Naive thymus-derived CD4-positive, alpha-beta T cell (primary cell): ENCODE measurements at regions of chr6 and their contacts with region 1.

Region 1: GRCh38 chr6:25992413-25993037 is 29.9 kb downstream of the TRIM38 start:
- DNase-seq: peak; percentile 83 to 98 (median 91)
- ATAC-seq: peak; percentile 99
- H3K4me3 ChIP-seq: peak overlapping the region; percentile 79
- H3K4me3 Mint-ChIP-seq: peak overlapping the region; percentile 91 to 98 (median 94)
- H3K27ac ChIP-seq: peak overlapping the region; percentile 73
- H3K27ac Mint-ChIP-seq: peak overlapping the region; percentile 86 to 98 (median 95)
- H3K4me1 ChIP-seq: no peaks in the 10 kb centered on the region
- H3K4me1 Mint-ChIP-seq: peaks cover 0 to 40% (median 24%) of the 10 kb centered on the region in 7 donors
- H3K27me3 ChIP-seq: no peaks in the 10 kb centered on the region
- H3K27me3 Mint-ChIP-seq: no peaks in the 10 kb centered on the region

Region 2: GRCh38 chr6:25223490-25223991 is 769.0 kb before region 1 on chr6:
- CTCF ChIA-PET with region 1: no interaction called
- POLR2A ChIA-PET with region 1: no interaction called
- intact Hi-C with region 1: no loop called
- DNase-seq: peak; percentile 32 to 63 (median 58)
- ATAC-seq: peak; percentile 78
- H3K4me3 ChIP-seq: peak overlapping the region; percentile 16
- H3K4me3 Mint-ChIP-seq: peak overlapping the region; percentile 31 to 85 (median 67)
- H3K27ac ChIP-seq: no peak overlapping the region
- H3K27ac Mint-ChIP-seq: no peak overlapping the region
- H3K4me1 ChIP-seq: peaks cover 0 to 6% of the 10 kb centered on the region in 2 donors
- H3K4me1 Mint-ChIP-seq: peaks cover 9 to 14% (median 11%) of the 10 kb centered on the region in 7 donors
- H3K27me3 ChIP-seq: no peaks in the 10 kb centered on the region
- H3K27me3 Mint-ChIP-seq: peaks cover 0 to 22% (median 8%) of the 10 kb centered on the region in 5 donors

Region 3: DNA sequence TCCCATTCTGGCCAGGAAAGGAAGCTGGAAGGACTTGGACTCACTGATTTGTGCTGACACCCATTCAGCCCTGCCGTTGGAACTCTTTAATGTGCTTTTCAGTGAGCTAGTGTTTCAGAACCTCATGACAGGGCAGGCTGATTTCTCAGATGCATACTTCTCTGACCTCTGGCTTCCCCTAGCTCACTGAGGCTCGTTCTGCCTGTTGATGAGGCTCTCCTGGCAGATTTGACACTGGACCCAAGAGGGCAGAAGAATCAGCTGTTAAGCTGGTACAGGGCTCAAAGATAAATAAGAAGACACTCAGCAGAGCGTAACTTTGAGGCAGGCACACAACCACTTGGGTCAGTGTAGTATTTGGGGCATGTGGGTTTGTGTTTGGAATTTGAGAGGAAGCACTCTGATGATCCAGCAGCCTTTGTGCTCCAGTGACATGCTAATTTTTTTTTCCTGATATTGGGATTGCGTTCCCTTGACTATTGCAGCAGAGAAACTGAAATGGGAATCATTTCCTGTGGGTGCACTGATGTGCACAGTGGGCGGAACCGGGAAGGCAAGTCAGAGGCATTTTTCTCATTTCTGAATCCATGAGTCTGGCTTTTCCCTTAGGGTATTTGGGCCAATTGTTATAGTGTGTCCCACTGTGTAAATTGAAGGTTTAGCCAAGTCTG is 633.2 kb before region 1 on chr6:
- CTCF ChIA-PET with region 1: no interaction called
- POLR2A ChIA-PET with region 1: no interaction called
- intact Hi-C with region 1: no loop called
- DNase-seq: no peak
- ATAC-seq: no peak
- H3K4me3 ChIP-seq: no peak overlapping the region
- H3K4me3 Mint-ChIP-seq: no peak overlapping the region
- H3K27ac ChIP-seq: no peak overlapping the region
- H3K27ac Mint-ChIP-seq: peak overlapping the region in 4 of 9 donors; percentile 18 to 55 (median 38)
- H3K4me1 ChIP-seq: no peaks in the 10 kb centered on the region
- H3K4me1 Mint-ChIP-seq: peaks cover 0 to 69% (median 34%) of the 10 kb centered on the region in 7 donors
- H3K27me3 ChIP-seq: no peaks in the 10 kb centered on the region
- H3K27me3 Mint-ChIP-seq: no peaks in the 10 kb centered on the region

Region 4: GRCh38 chr6:25717866-25718740 is 274.4 kb before region 1 on chr6:
- CTCF ChIA-PET with region 1: interaction called, 12 read pairs
- POLR2A ChIA-PET with region 1: interaction called, 4 read pairs
- intact Hi-C with region 1: loop called (anchors 1 to 2 kb)
- DNase-seq: peak in 4 of 9 donors; percentile 4 to 14 (median 10)
- ATAC-seq: no peak
- H3K4me3 ChIP-seq: no peak overlapping the region
- H3K4me3 Mint-ChIP-seq: no peak overlapping the region
- H3K27ac ChIP-seq: no peak overlapping the region
- H3K27ac Mint-ChIP-seq: no peak overlapping the region
- H3K4me1 ChIP-seq: no peaks in the 10 kb centered on the region
- H3K4me1 Mint-ChIP-seq: no peaks in the 10 kb centered on the region
- H3K27me3 ChIP-seq: no peaks in the 10 kb centered on the region
- H3K27me3 Mint-ChIP-seq: peaks cover 0 to 32% (median 12%) of the 10 kb centered on the region in 5 donors

Region 5: DNA sequence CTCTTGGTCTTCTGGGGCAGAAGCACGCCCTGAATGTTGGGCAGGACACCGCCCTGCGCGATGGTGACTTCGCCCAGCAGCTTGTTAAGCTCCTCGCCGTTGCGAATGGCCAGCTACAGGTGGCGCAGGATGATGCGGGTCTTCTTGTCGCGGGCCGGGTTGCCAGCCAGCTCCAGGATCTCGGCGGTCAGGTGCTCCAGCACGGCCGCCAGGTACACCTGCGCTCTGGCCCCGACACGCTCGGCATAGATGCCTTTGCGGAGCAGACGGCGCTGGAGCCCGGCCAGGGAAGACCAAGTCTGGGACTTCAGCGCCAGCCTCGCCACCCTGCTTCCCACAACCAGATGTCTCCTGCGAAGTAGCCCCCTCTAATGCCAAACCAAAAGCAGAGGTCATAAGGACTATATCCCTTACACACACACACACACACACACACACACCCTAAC is 110.5 kb before region 1 on chr6:
- CTCF ChIA-PET with region 1: no interaction called
- POLR2A ChIA-PET with region 1: no interaction called
- intact Hi-C with region 1: loop called in 1 of 2 experiments (anchors 5 kb)
- DNase-seq: peak in 7 of 9 donors; percentile 10 to 61 (median 35)
- ATAC-seq: peak; percentile 81
- H3K4me3 ChIP-seq: peak overlapping the region; percentile 53
- H3K4me3 Mint-ChIP-seq: peak overlapping the region in 8 of 10 donors; percentile 71 to 88 (median 84)
- H3K27ac ChIP-seq: no peak overlapping the region
- H3K27ac Mint-ChIP-seq: peak overlapping the region in 4 of 9 donors; percentile 16 to 60 (median 33)
- H3K4me1 ChIP-seq: no peaks in the 10 kb centered on the region
- H3K4me1 Mint-ChIP-seq: peaks cover 0 to 14% (median 0%) of the 10 kb centered on the region in 7 donors
- H3K27me3 ChIP-seq: no peaks in the 10 kb centered on the region
- H3K27me3 Mint-ChIP-seq: peaks cover 0 to 7% (median 0%) of the 10 kb centered on the region in 5 donors

Region 6: GRCh38 chr6:26003102-26003694 is 10.7 kb after region 1 on chr6:
- CTCF ChIA-PET with region 1: interaction called, 48 read pairs
- POLR2A ChIA-PET with region 1: interaction called, 22 read pairs
- intact Hi-C with region 1: no loop called
- DNase-seq: peak in 6 of 9 donors; percentile 34 to 44 (median 38)
- ATAC-seq: peak; percentile 63
- H3K4me3 ChIP-seq: no peak overlapping the region
- H3K4me3 Mint-ChIP-seq: no peak overlapping the region
- H3K27ac ChIP-seq: no peak overlapping the region
- H3K27ac Mint-ChIP-seq: no peak overlapping the region
- H3K4me1 ChIP-seq: no peaks in the 10 kb centered on the region
- H3K4me1 Mint-ChIP-seq: peaks cover 4 to 15% (median 10%) of the 10 kb centered on the region in 7 donors
- H3K27me3 ChIP-seq: no peaks in the 10 kb centered on the region
- H3K27me3 Mint-ChIP-seq: no peaks in the 10 kb centered on the region

Region 7: GRCh38 chr6:26020329-26021000 is 27.9 kb after region 1 on chr6:
- CTCF ChIA-PET with region 1: interaction called, 20 read pairs
- POLR2A ChIA-PET with region 1: interaction called, 65 read pairs
- intact Hi-C with region 1: loop called (anchors 1 kb)
- DNase-seq: peak; percentile 68 to 94 (median 91)
- ATAC-seq: peak; percentile 66
- H3K4me3 ChIP-seq: peak overlapping the region; percentile 96
- H3K4me3 Mint-ChIP-seq: peak overlapping the region; percentile 82 to 100 (median 94)
- H3K27ac ChIP-seq: peak overlapping the region; percentile 97
- H3K27ac Mint-ChIP-seq: peak overlapping the region; percentile 95 to 100 (median 100)
- H3K4me1 ChIP-seq: peaks cover 0 to 10% of the 10 kb centered on the region in 2 donors
- H3K4me1 Mint-ChIP-seq: peaks cover 10 to 62% (median 45%) of the 10 kb centered on the region in 7 donors
- H3K27me3 ChIP-seq: no peaks in the 10 kb centered on the region
- H3K27me3 Mint-ChIP-seq: peaks cover 0 to 6% (median 0%) of the 10 kb centered on the region in 5 donors

Region 8: DNA sequence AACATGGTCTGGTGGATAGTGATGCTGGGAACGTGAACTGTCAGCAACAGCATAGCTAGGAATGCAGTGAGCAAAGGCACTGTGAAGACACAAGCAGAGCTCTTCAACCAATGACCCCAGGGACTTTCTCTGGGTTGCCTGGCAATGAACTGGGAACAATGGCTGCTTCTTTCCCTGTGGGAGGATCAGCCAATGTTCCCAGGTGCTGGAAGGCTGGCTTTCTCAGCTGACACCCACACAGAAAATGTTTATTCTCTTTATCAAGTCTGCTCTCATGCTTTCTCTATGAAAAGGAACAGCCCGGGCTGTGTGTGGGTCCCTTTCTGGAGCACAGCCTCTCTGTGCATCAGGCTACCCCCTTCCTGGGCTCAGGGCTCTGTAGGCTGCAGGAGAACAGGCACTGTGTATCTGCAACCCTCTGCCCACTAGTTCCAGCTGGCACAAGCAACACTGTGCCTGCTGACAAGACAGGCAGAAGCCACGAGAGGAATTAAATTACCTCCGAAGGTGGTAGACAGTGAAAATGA is 148.9 kb after region 1 on chr6:
- CTCF ChIA-PET with region 1: no interaction called
- POLR2A ChIA-PET with region 1: no interaction called
- intact Hi-C with region 1: no loop called
- DNase-seq: no peak
- ATAC-seq: no peak
- H3K4me3 ChIP-seq: no peak overlapping the region
- H3K4me3 Mint-ChIP-seq: no peak overlapping the region
- H3K27ac ChIP-seq: no peak overlapping the region
- H3K27ac Mint-ChIP-seq: peak overlapping the region in 3 of 9 donors; percentile 13 to 59 (median 38)
- H3K4me1 ChIP-seq: no peaks in the 10 kb centered on the region
- H3K4me1 Mint-ChIP-seq: peaks cover 2 to 17% (median 9%) of the 10 kb centered on the region in 7 donors
- H3K27me3 ChIP-seq: no peaks in the 10 kb centered on the region
- H3K27me3 Mint-ChIP-seq: peaks cover 0 to 2% (median 0%) of the 10 kb centered on the region in 5 donors